CD8-positive, alpha-beta T cell (primary cell): ENCODE measurements at regions of chr1 and their contacts with region 1.

Region 1: DNA sequence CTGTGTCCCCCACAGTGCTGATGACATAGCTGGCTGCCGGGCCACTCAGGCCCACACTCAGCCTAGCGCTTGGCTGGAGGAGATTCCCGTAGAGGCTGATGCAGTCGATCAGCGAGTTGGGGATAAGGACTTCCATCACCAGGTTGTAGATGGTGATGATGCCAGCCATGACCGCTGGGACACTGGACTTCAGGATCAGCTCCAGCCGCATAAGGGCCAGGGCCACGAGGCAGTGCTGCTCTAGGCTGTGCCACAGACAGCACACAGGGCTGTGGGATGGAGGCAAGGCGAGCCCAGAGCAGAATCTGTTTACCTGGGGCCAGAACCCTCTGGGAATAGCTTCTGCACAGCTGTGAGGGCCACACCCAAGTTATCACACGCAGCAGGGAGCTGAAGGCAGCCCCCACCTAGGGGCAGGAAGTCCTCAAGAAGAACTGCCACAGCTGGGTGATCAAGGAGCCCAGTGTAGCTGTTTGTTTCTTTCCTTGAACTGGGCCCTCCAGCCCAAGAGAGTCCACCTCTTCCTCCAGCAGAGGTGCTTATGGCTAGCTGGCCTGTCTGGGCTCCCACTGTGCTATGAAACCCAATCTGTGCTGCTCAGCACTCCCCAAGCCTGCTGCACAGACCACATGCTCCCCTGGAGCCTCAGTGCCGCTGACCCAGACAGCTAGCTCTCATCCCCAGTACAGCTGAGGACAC is 6.2 kb downstream of the SLC2A1 start:
- DNase-seq: peak in 7 of 9 experiments; percentile 39 to 76 (median 48)
- ATAC-seq: peak; percentile 59
- H3K4me3 ChIP-seq: peak overlapping the region; percentile 21 to 33
- H3K4me3 Mint-ChIP-seq: peak overlapping the region; percentile 50
- H3K27ac ChIP-seq: peak overlapping the region; percentile 30 to 73
- H3K27ac Mint-ChIP-seq: peak overlapping the region; percentile 76
- H3K4me1 ChIP-seq: peaks cover 93% of the 10 kb centered on the region
- H3K4me1 Mint-ChIP-seq: peaks cover 88% of the 10 kb centered on the region
- H3K27me3 ChIP-seq: no peaks in the 10 kb centered on the region
- H3K27me3 Mint-ChIP-seq: no peaks in the 10 kb centered on the region
- CTCF ChIP-seq: no peak

Region 2: GRCh38 chr1:42137766-42138165 is 814.7 kb before region 1 on chr1:
- CTCF ChIA-PET with region 1: no interaction called
- POLR2A ChIA-PET with region 1: no interaction called
- intact Hi-C with region 1: no loop called
- DNase-seq: no peak
- ATAC-seq: no peak
- H3K4me3 ChIP-seq: no peak overlapping the region
- H3K4me3 Mint-ChIP-seq: no peak overlapping the region
- H3K27ac ChIP-seq: no peak overlapping the region
- H3K27ac Mint-ChIP-seq: no peak overlapping the region
- H3K4me1 ChIP-seq: no peaks in the 10 kb centered on the region
- H3K4me1 Mint-ChIP-seq: no peaks in the 10 kb centered on the region
- H3K27me3 ChIP-seq: no peaks in the 10 kb centered on the region
- H3K27me3 Mint-ChIP-seq: no peaks in the 10 kb centered on the region
- CTCF ChIP-seq: no peak

Region 3: GRCh38 chr1:42936309-42937078 is 16.0 kb before region 1 on chr1:
- CTCF ChIA-PET with region 1: interaction called, 10 read pairs
- POLR2A ChIA-PET with region 1: interaction called, 16 read pairs
- intact Hi-C with region 1: no loop called
- DNase-seq: peak in 5 of 9 experiments; percentile 47 to 83 (median 67)
- ATAC-seq: peak; percentile 35
- H3K4me3 ChIP-seq: no peak overlapping the region
- H3K4me3 Mint-ChIP-seq: peak overlapping the region; percentile 42
- H3K27ac ChIP-seq: peak overlapping the region; percentile 19 to 90
- H3K27ac Mint-ChIP-seq: peak overlapping the region; percentile 95
- H3K4me1 ChIP-seq: peaks cover 79% of the 10 kb centered on the region
- H3K4me1 Mint-ChIP-seq: peaks cover 97% of the 10 kb centered on the region
- H3K27me3 ChIP-seq: no peaks in the 10 kb centered on the region
- H3K27me3 Mint-ChIP-seq: no peaks in the 10 kb centered on the region
- CTCF ChIP-seq: no peak